ENCODE measurements at regions of chr6 and their contacts with region 1.

Region 1: DNA sequence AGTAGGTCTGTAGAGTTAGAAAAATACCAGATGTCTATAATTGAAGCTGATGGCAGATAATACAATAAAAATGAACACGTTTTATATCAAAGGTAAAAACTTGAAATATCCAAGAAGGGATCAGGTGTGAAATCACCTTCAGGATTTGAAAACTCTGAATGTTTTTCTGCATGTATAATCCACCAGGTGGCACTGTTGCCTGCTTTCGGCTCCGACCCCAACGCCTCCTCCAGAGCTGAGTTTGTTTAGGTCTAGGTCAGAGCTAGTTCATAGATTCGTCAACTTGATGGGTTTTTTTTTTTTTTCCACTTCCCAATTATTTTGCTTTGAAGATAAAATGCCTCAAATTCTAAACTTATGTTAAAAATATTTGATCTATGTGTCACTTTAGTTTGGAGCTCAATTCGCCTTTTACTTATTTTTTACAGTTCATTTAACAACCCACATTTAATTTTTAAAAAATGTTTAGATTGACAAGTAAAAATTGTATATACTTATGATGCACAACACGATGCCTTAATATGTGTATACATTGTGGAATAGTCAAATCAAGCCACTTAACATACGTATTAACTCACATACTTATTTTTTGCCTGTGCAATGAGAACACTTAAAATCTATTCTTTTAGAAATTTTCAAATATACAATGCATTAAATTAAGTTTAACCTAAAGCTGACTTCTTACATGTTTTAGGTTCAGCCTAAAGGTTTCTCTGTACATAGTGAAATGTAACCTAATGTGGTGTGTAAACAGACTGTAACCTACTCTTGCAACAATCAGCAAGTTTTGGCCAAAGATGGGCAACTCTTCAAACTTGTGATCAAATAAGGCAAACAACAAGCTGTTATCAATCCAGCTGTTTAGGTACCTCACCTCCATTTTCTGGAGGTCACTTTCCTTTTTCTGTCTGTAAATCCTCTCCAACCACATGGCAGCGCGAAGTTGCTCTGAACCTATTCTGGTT is 39.4 kb upstream of the ENPP4 start:
- DNase-seq: peak; percentile 32
- ATAC-seq: peak; percentile 67
- H3K4me3 Mint-ChIP-seq: no peak overlapping the region
- H3K27ac Mint-ChIP-seq: no peak overlapping the region
- H3K4me1 Mint-ChIP-seq: peaks cover 5% of the 10 kb centered on the region
- H3K27me3 Mint-ChIP-seq: peaks cover 11% of the 10 kb centered on the region
- CTCF ChIP-seq: no peak

Region 2: DNA sequence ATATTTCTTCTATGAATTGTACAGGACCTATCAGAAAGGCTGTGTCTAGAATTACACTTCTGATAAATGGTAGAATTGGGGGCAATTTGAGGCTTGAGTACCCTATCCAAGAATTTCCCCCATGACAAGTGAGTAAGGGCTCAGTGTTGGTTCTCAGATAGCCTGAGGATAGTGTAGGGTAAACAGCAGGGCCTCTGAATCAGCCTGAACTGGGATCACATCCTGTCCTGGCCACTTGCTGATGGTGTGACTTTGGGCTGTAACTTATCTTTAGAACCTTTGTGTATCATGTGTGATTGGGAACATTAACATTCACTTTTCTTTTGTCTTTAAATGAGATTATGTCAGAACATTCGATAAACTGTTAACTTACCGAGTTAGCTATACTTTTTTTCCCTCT is 225.7 kb before region 1 on chr6:
- CTCF ChIA-PET with region 1: no interaction called
- POLR2A ChIA-PET with region 1: no interaction called
- intact Hi-C with region 1: no loop called
- DNase-seq: no peak
- ATAC-seq: no peak
- H3K4me3 Mint-ChIP-seq: no peak overlapping the region
- H3K27ac Mint-ChIP-seq: no peak overlapping the region
- H3K4me1 Mint-ChIP-seq: no peaks in the 10 kb centered on the region
- H3K27me3 Mint-ChIP-seq: peaks cover 2% of the 10 kb centered on the region
- CTCF ChIP-seq: no peak

Region 3: GRCh38 chr6:45930420-45931040 is 159.9 kb before region 1 on chr6:
- CTCF ChIA-PET with region 1: interaction called, 8 read pairs
- POLR2A ChIA-PET with region 1: no interaction called
- intact Hi-C with region 1: loop called (anchors 1 kb)
- DNase-seq: peak; percentile 25
- ATAC-seq: peak; percentile 45
- H3K4me3 Mint-ChIP-seq: no peak overlapping the region
- H3K27ac Mint-ChIP-seq: no peak overlapping the region
- H3K4me1 Mint-ChIP-seq: no peaks in the 10 kb centered on the region
- H3K27me3 Mint-ChIP-seq: peaks cover 2% of the 10 kb centered on the region
- CTCF ChIP-seq: peak; percentile 99

Region 4: DNA sequence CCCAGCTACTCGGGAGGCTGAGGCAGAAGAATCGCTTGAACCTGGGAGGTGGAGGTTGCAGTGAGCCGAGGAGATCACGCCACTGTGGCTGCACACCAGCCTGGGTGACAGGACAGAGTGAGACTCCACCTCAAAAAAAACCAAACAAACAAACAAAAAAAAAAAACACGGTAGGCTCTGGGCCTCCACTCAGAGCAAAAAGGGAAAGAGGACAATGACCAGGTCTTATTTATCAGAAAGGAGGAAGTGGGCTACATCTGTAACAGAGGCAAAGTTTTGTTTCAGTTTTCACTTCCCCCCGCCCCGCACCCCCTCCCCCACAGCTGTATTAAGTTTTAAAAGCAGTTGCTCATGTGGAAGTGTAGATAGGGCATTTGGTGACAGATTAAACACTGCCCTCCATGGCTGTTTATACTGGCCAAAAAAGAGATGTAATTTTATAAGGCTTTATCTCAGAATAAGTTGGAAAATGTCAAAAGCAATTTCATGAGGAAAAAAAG is 286.2 kb after region 1 on chr6:
- CTCF ChIA-PET with region 1: interaction called, 10 read pairs
- POLR2A ChIA-PET with region 1: no interaction called
- intact Hi-C with region 1: no loop called
- DNase-seq: peak; percentile 17
- ATAC-seq: peak; percentile 89
- H3K4me3 Mint-ChIP-seq: peak overlapping the region; percentile 69
- H3K27ac Mint-ChIP-seq: peak overlapping the region; percentile 86
- H3K4me1 Mint-ChIP-seq: peaks cover 77% of the 10 kb centered on the region
- H3K27me3 Mint-ChIP-seq: no peaks in the 10 kb centered on the region
- CTCF ChIP-seq: no peak

Region 5: DNA sequence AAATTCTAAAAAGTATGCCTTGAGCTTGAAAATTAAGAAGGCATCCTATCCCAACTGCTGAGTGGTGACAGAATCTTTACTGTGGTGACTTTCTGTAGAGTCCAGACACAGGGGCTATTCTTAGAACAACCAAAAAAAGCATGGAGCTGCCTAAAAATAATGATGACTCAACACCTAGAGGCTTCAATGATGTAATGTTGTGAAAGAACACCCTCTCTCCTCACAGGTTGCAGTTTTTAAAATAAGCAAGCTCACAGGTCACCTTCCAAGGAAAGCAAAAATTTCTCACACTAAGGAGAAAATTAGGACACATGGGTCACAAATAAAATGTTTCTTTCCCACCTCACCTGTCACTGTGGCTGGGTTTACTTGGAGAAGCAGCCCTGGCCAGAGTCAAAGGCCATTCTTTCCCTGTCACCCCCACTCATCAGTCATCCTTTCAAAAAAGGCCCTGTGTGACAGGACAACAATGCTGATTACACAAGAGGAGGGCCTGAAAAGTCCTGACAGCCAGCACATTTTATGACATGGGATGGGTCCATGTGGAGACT is 347.3 kb after region 1 on chr6:
- CTCF ChIA-PET with region 1: no interaction called
- POLR2A ChIA-PET with region 1: no interaction called
- intact Hi-C with region 1: no loop called
- DNase-seq: no peak
- ATAC-seq: no peak
- H3K4me3 Mint-ChIP-seq: no peak overlapping the region
- H3K27ac Mint-ChIP-seq: no peak overlapping the region
- H3K4me1 Mint-ChIP-seq: no peaks in the 10 kb centered on the region
- H3K27me3 Mint-ChIP-seq: peaks cover 5% of the 10 kb centered on the region
- CTCF ChIP-seq: no peak

Region 6: GRCh38 chr6:46491628-46492547 is 401.5 kb after region 1 on chr6:
- CTCF ChIA-PET with region 1: no interaction called
- POLR2A ChIA-PET with region 1: no interaction called
- intact Hi-C with region 1: loop called (anchors 5 kb)
- DNase-seq: no peak
- ATAC-seq: peak; percentile 53
- H3K4me3 Mint-ChIP-seq: peak overlapping the region; percentile 71
- H3K27ac Mint-ChIP-seq: no peak overlapping the region
- H3K4me1 Mint-ChIP-seq: peaks cover 10% of the 10 kb centered on the region
- H3K27me3 Mint-ChIP-seq: peaks cover 63% of the 10 kb centered on the region
- CTCF ChIP-seq: no peak

Region 7: GRCh38 chr6:46781478-46782378 is 691.3 kb after region 1 on chr6:
- CTCF ChIA-PET with region 1: no interaction called
- POLR2A ChIA-PET with region 1: no interaction called
- intact Hi-C with region 1: loop called (anchors 1 kb)
- DNase-seq: no peak
- ATAC-seq: no peak
- H3K4me3 Mint-ChIP-seq: no peak overlapping the region
- H3K27ac Mint-ChIP-seq: no peak overlapping the region
- H3K4me1 Mint-ChIP-seq: no peaks in the 10 kb centered on the region
- H3K27me3 Mint-ChIP-seq: no peaks in the 10 kb centered on the region
- CTCF ChIP-seq: no peak

Measured in activated B cell treated with CpG ODN at 0.5 μM for 24 hours (primary cell).